Activated CD4-positive, alpha-beta T cell treated with anti-CD3 and anti-CD28 coated beads for 36 hours (primary cell): ENCODE measurements at regions of chr19 and their contacts with region 1.

Region 1: DNA sequence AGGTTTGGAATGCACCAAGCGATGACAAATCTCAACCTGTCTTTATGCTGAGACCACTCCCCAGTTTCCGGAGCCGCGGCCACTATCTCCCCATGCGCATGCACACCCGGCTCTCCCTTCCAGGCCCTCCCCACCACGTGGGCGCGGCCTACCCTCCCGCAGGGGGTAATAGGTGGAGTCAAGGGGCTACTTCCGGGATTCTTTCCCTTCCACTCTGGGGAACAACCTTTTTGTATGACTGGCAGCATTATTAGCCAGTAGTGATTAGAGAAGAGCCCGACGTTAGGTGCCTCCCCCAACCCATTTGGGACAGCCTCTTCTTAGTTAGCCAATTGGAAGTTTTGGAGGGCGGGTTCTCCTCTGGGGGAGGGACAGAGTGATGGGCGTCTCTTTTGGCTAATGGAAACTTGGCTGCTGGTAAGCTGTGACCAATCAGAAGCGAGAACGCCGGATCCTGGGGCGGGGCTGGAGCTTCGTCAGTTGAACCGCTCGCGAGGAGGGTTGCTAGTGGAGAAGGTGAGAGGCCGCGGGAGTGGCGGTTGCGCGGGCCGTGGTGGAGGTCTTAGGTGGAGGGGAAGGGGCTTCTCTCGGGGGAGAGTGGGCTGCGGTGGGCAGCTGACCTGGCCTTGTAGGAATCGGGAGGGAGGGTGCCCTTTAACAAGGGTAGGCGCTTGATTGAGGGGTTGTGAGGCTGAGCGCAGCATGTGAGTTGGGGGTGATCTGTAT is at the start of gene CCDC61:
- DNase-seq: peak; percentile 96
- ATAC-seq: peak; percentile 98
- H3K4me3 Mint-ChIP-seq: no peak within 1 kb of the TSS
- H3K27ac Mint-ChIP-seq: no peak within 1 kb of the TSS
- H3K4me1 Mint-ChIP-seq: peaks cover 22% of the 10 kb centered on the region
- H3K27me3 Mint-ChIP-seq: peaks cover 7% of the 10 kb centered on the region
- total RNA-seq, gene CCDC61: 22.4 to 26.2 TPM

Region 2: DNA sequence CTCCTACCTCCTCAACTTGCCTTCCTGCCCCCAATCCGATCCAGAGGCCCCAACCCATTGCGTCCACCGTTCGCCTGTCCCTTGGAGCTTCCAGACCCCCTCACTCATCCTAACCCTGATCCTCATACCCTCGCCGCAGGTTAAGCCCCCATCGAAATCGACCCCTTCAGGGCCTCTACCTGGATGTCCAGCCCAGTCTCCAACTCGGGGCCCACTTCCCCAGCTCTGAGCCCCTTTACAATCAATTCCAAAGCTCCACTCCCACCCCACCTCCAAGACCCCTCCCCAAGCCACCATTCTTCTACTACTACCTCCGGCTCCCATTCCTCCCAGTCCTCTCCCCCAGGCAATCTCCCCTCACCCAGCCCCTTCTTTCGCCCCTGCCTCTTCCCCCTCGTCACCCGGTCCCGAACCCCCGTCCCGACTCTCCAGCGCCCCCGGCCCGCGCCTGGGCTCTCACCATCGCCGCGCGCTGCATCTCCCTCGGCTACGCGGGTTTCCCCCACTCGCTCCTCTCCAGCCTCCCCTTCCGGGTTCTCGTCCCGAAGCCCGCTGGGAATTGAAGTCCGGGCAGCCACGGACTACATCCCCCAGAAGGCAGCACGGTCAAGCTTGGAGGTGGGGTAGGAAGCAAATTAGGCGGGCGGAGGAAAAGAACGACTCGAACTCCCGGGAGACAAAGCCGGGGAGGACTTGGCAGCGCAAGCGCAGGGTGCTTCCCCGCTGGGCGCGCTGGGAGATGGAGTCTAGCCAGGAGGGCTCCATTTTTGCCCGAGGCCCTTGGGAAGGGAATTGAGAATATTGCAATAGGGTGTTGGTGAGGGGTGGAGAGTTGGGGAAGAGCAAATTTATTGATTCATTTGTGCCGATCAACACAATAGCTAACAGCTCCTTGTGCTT is 264.5 kb before region 1 on chr19 and contains the start of gene FBXO46:
- CTCF ChIA-PET with region 1: no interaction called
- POLR2A ChIA-PET with region 1: no interaction called
- intact Hi-C with region 1: loop called in 1 of 2 experiments (anchors 1 kb)
- DNase-seq: peak; percentile 97
- ATAC-seq: peak; percentile 99
- H3K4me3 Mint-ChIP-seq: peak within 1 kb of the TSS; percentile 88
- H3K27ac Mint-ChIP-seq: peak within 1 kb of the TSS; percentile 90
- H3K4me1 Mint-ChIP-seq: peaks cover 35% of the 10 kb centered on the region
- H3K27me3 Mint-ChIP-seq: no peaks in the 10 kb centered on the region
- total RNA-seq, gene FBXO46: 32.3 to 43.3 TPM

Region 3: GRCh38 chr19:45886427-45887199 is 108.5 kb before region 1 on chr19:
- CTCF ChIA-PET with region 1: no interaction called
- POLR2A ChIA-PET with region 1: no interaction called
- intact Hi-C with region 1: loop called (anchors 1 kb)
- DNase-seq: peak; percentile 96
- ATAC-seq: peak; percentile 85
- H3K4me3 Mint-ChIP-seq: peak overlapping the region; percentile 85
- H3K27ac Mint-ChIP-seq: peak overlapping the region; percentile 95
- H3K4me1 Mint-ChIP-seq: peaks cover 17% of the 10 kb centered on the region
- H3K27me3 Mint-ChIP-seq: no peaks in the 10 kb centered on the region

Region 4: GRCh38 chr19:45927565-45928261 is 67.4 kb before region 1 on chr19:
- CTCF ChIA-PET with region 1: no interaction called
- POLR2A ChIA-PET with region 1: no interaction called
- intact Hi-C with region 1: loop called in 1 of 2 experiments (anchors 1 kb)
- DNase-seq: peak; percentile 96
- ATAC-seq: peak; percentile 100
- H3K4me3 Mint-ChIP-seq: peak overlapping the region; percentile 56
- H3K27ac Mint-ChIP-seq: peak overlapping the region; percentile 68
- H3K4me1 Mint-ChIP-seq: peaks cover 12% of the 10 kb centered on the region
- H3K27me3 Mint-ChIP-seq: peaks cover 7% of the 10 kb centered on the region

Region 5: GRCh38 chr19:46016426-46017094 is 21.4 kb after region 1 on chr19:
- CTCF ChIA-PET with region 1: interaction called, 4 read pairs
- POLR2A ChIA-PET with region 1: no interaction called
- intact Hi-C with region 1: loop called in 1 of 2 experiments (anchors 1 kb)
- DNase-seq: peak; percentile 90
- ATAC-seq: peak; percentile 73
- H3K4me3 Mint-ChIP-seq: peak overlapping the region; percentile 66
- H3K27ac Mint-ChIP-seq: no peak overlapping the region
- H3K4me1 Mint-ChIP-seq: peaks cover 16% of the 10 kb centered on the region
- H3K27me3 Mint-ChIP-seq: peaks cover 14% of the 10 kb centered on the region

Region 6: GRCh38 chr19:46081928-46082727 is 87.0 kb after region 1 on chr19:
- CTCF ChIA-PET with region 1: no interaction called
- POLR2A ChIA-PET with region 1: no interaction called
- intact Hi-C with region 1: no loop called
- DNase-seq: peak; percentile 28
- ATAC-seq: peak; percentile 68
- H3K4me3 Mint-ChIP-seq: no peak overlapping the region
- H3K27ac Mint-ChIP-seq: no peak overlapping the region
- H3K4me1 Mint-ChIP-seq: peaks cover 3% of the 10 kb centered on the region
- H3K27me3 Mint-ChIP-seq: peaks cover 60% of the 10 kb centered on the region

Region 7: GRCh38 chr19:46115396-46116106 is 120.4 kb after region 1 on chr19:
- CTCF ChIA-PET with region 1: no interaction called
- POLR2A ChIA-PET with region 1: no interaction called
- intact Hi-C with region 1: no loop called
- DNase-seq: peak; percentile 84
- ATAC-seq: peak; percentile 99
- H3K4me3 Mint-ChIP-seq: no peak overlapping the region
- H3K27ac Mint-ChIP-seq: no peak overlapping the region
- H3K4me1 Mint-ChIP-seq: peaks cover 13% of the 10 kb centered on the region
- H3K27me3 Mint-ChIP-seq: peaks cover 59% of the 10 kb centered on the region